Thyroid gland (tissue), 4 donors: ENCODE measurements at regions of chrX and their contacts with region 1.

Region 1: DNA sequence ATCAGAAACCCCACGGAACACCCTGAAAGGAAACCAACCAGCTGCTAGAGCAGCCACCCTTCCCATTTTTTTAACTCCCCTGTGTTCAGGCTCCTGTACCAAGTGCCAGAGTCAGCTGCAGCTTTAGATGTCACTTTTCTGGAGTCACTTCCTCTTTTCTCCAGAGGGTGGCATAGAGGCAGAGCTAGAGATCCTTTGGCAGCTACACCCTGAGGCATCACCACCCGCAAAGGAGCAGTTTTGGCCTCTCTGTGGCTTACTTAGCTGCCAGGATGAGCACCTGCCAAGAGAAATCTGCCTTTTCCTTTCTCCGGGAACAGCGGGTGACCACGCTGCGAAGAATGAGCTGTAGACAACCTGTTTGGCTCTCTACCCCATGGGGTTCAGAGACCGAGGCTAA is 58.0 kb upstream of the CHRDL1 start:
- DNase-seq: peak; percentile 55 to 64
- H3K4me3 ChIP-seq: no peak overlapping the region
- H3K27ac ChIP-seq: no peak overlapping the region
- H3K4me1 ChIP-seq: no peaks in the 10 kb centered on the region
- H3K27me3 ChIP-seq: no peaks in the 10 kb centered on the region
- CTCF ChIP-seq: peak in 5 of 6 experiments; percentile 15 to 66 (median 51)
- POLR2A ChIP-seq: no peak

Region 2: DNA sequence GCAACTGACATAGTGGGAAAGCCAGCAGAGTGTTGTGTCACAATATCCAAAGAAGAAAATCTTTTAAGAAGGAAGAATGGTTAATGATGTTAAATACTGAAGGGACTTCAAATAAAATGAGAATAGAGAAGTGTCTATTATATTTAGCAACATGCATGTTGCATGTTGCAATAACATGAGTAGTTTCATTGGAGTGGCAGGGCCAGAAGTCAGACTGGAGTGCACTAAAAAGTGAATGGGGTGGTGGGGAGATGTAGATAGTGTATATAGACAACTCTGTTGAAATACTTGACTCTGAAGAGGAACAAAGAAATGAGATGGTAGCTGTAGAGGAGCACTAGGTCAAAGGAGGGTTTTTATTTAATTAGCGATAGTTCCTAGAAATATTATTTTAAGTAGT is 526.3 kb before region 1 on chrX:
- intact Hi-C with region 1: no loop called
- DNase-seq: no peak
- H3K4me3 ChIP-seq: no peak overlapping the region
- H3K27ac ChIP-seq: no peak overlapping the region
- H3K4me1 ChIP-seq: no peaks in the 10 kb centered on the region
- H3K27me3 ChIP-seq: no peaks in the 10 kb centered on the region
- CTCF ChIP-seq: no peak
- POLR2A ChIP-seq: no peak

Region 3: DNA sequence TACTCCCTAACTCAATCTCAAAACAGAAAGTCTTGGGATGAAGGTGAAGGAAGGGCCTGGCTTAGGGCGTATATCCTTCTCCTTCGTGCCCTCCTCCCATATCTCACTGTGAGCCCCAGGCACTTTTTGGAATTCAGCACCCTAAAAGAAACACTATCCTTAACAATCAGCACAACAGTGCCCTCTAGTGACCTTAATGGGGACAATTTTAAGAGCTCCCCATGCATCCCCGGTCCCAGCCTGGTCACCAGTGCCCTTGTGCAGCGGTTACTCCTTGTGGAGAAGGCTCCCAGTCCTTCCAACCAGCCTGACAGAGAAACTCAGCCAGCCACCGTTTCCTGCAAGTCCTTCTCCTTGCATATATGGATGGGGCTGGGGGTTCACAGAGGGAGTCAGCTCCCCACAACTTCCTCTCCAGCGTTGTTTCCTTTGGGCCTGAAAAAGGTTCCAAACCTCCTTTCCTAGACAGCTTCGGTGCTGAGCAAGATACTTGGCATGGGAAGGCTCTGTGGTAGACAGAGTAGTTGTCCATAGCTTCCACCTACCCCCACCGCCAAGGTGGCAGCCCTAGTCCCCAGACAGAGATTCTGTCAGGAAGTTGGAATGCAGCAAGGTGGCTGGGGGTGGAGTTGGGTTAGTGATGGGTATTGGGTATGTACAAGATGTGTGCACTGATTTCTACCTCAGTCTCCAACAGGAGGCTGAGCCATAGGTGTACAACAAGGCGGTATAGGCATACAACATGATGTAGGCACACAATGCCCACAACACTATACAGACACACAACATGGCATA is 246.8 kb after region 1 on chrX:
- intact Hi-C with region 1: loop called (anchors 5 kb)
- DNase-seq: peak in 1 of 2 donors; percentile 3
- H3K4me3 ChIP-seq: no peak overlapping the region
- H3K27ac ChIP-seq: no peak overlapping the region
- H3K4me1 ChIP-seq: no peaks in the 10 kb centered on the region
- H3K27me3 ChIP-seq: no peaks in the 10 kb centered on the region
- CTCF ChIP-seq: peak in 4 of 6 experiments; percentile 23 to 44 (median 30)
- POLR2A ChIP-seq: no peak